IMR-90 (cell line): ENCODE measurements at regions of chr7 and their contacts with region 1.

Region 1: DNA sequence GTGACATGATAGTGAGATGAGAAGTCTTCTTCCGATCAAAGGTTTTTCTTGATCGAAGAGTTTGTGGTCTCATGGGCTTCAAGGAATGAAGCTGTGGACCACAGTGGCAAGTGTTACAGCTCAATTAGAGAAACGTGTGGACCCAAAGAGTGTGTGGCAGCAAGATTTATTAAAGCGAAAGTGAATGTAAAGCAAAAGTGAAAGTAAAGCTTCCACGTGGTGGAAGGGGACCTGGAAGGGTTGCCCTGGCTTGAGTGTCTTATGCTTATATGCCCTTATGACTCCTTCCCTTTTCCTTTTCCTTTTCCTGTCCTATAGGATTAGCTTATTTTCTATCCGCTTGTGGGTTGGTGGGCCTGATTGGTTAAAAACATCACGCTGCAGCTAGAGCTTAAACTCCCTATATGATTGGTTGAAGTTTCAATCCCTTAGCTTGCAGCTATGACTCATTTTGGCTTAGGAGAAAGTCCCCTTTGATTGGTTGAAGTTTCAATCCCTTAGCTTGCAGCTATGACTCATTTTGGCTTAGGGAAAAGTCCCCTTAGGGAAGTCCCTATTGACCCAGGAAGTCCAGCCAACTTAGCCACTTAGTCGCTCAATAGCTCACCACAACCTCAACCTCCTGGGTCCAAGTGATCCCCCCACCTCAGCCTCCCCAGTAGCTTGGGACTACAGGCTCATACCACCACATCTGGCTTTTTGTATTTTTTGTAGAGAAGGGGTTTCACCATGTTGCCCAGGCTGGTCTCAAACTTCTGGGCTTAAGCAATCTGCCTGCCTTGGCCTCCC is 34.7 kb downstream of the MRPS24 start:
- DNase-seq: peak; percentile 40
- ATAC-seq: no peak
- H3K4me3 ChIP-seq: peak overlapping the region; percentile 3; the same call in 1 of the 2 replicates
- H3K27ac ChIP-seq: no peak overlapping the region
- H3K4me1 ChIP-seq: no peaks in the 10 kb centered on the region
- H3K27me3 ChIP-seq: peaks cover 2% of the 10 kb centered on the region; the same call in 1 of the 2 replicates
- CTCF ChIP-seq: no peak
- POLR2A ChIP-seq: no peak
- RAD21 ChIP-seq: no peak

Region 2: GRCh38 chr7:42931834-42932651 is 902.6 kb before region 1 on chr7 and contains the starts of genes MRPL32 and PSMA2:
- CTCF ChIA-PET with region 1: no interaction called
- POLR2A ChIA-PET with region 1: no interaction called
- dilution Hi-C with region 1: no loop called
- in situ Hi-C with region 1: loop called (anchors 25 kb)
- intact Hi-C with region 1: no loop called
- DNase-seq: peak; percentile 97
- ATAC-seq: peak; percentile 99
- H3K4me3 ChIP-seq: peak within 1 kb of the TSS; percentile 69
- H3K27ac ChIP-seq: peak within 1 kb of the TSS; percentile 83
- H3K4me1 ChIP-seq: peaks cover 4% of the 10 kb centered on the region
- H3K27me3 ChIP-seq: no peaks in the 10 kb centered on the region
- CTCF ChIP-seq: no peak
- POLR2A ChIP-seq: peak; percentile 81
- RAD21 ChIP-seq: no peak
- total RNA-seq, gene MRPL32: 42.3 and 56.7 TPM in 2 replicates
- total RNA-seq, gene PSMA2: 138 and 217 TPM in 2 replicates

Region 3: DNA sequence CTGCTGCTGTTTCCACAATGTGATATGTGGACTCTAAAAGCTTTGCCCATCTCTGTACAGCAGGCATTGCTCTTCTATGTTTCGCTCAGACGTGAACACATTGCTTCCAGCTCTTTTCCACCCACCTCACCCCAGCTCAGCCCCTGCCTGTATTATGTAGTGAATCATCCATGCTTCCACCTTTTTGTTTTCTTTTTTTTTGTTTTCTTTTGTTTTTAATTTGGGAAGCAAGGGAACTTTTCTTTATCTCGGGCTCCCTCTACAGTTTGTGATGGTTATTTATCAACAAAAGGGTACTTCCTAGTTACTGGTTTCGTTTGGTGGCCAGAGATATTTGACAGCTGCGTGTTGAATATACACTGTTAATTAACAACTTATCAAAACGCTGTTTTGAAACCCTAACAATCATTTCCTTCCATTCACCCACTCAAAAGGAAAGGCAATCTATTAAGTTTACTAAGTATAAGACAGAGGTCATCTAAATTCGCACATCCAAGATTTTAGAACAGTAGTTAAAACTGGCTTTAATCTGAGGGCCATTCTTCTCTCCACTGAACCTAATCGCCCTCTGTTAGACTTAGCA is 379.6 kb before region 1 on chr7:
- CTCF ChIA-PET with region 1: no interaction called
- POLR2A ChIA-PET with region 1: no interaction called
- dilution Hi-C with region 1: no loop called
- in situ Hi-C with region 1: no loop called
- intact Hi-C with region 1: loop called (anchors 10 kb)
- DNase-seq: peak; percentile 42
- ATAC-seq: peak; percentile 63
- H3K4me3 ChIP-seq: no peak overlapping the region
- H3K27ac ChIP-seq: no peak overlapping the region
- H3K4me1 ChIP-seq: no peaks in the 10 kb centered on the region
- H3K27me3 ChIP-seq: peaks cover 5% of the 10 kb centered on the region
- CTCF ChIP-seq: peak; percentile 54
- POLR2A ChIP-seq: no peak
- RAD21 ChIP-seq: peak; percentile 48

Region 4: GRCh38 chr7:43700059-43700501 is 134.6 kb before region 1 on chr7:
- CTCF ChIA-PET with region 1: interaction called, 5 read pairs
- POLR2A ChIA-PET with region 1: no interaction called
- dilution Hi-C with region 1: no loop called
- in situ Hi-C with region 1: no loop called
- intact Hi-C with region 1: loop called (anchors 1 kb)
- DNase-seq: peak; percentile 82
- ATAC-seq: peak; percentile 32; the same call in 1 of the 2 replicates
- H3K4me3 ChIP-seq: no peak overlapping the region
- H3K27ac ChIP-seq: no peak overlapping the region
- H3K4me1 ChIP-seq: peaks cover 9% of the 10 kb centered on the region
- H3K27me3 ChIP-seq: no peaks in the 10 kb centered on the region
- CTCF ChIP-seq: peak; percentile 89
- POLR2A ChIP-seq: peak; percentile 50; the same call in 1 of the 2 replicates
- RAD21 ChIP-seq: peak; percentile 93

Region 5: GRCh38 chr7:43847496-43847895 is 12.8 kb after region 1 on chr7:
- CTCF ChIA-PET with region 1: interaction called, 10 read pairs
- POLR2A ChIA-PET with region 1: no interaction called
- dilution Hi-C with region 1: no loop called
- in situ Hi-C with region 1: no loop called
- intact Hi-C with region 1: no loop called
- DNase-seq: peak; percentile 68
- ATAC-seq: no peak
- H3K4me3 ChIP-seq: no peak overlapping the region
- H3K27ac ChIP-seq: no peak overlapping the region
- H3K4me1 ChIP-seq: no peaks in the 10 kb centered on the region
- H3K27me3 ChIP-seq: peaks cover 5% of the 10 kb centered on the region; the same call in 1 of the 2 replicates
- CTCF ChIP-seq: no peak
- POLR2A ChIP-seq: no peak
- RAD21 ChIP-seq: no peak